ENCODE measurements at regions of chr1 and their contacts with region 1.

Region 1: GRCh38 chr1:204072931-204073836 is at the start of gene SOX13:
- DNase-seq: peak; percentile 86
- H3K4me3 ChIP-seq: peak within 1 kb of the TSS; percentile 42 to 73 (median 66)
- H3K27ac ChIP-seq: peak within 1 kb of the TSS; percentile 27
- H3K4me1 ChIP-seq: peaks cover 14% of the 10 kb centered on the region
- H3K27me3 ChIP-seq: no peaks in the 10 kb centered on the region
- CTCF ChIP-seq: peak in 1 of 2 donors; percentile 10
- POLR2A ChIP-seq: peak; percentile 94
- total RNA-seq, gene SOX13: 38.0 and 40.8 TPM in 2 replicates

Region 2: DNA sequence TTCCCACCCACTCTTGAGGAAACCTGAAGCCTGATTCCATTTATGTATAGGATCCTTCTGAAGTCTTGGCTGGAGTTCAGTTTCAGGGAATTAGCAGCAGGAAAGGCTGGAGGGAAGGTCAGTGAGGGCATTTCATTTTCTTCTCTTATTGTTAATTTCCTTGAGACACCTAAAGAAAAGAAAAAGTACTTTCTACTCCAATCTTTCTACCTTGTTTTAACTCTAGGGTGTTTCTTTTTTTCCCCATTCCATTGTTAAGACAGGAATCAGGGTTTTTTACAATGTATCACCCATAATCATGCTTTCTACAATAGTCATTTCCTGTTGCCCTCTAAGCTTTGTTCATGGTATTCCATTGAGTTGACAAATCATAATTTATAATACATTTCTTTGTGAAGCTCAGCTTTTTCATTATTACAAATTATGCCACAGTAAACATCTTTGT is 184.4 kb before region 1 on chr1:
- CTCF ChIA-PET with region 1: no interaction called
- POLR2A ChIA-PET with region 1: no interaction called
- dilution Hi-C with region 1: no loop called
- intact Hi-C with region 1: loop called (anchors 2 kb)
- DNase-seq: peak; percentile 92
- H3K4me3 ChIP-seq: no peak overlapping the region
- H3K27ac ChIP-seq: peak overlapping the region; percentile 92
- H3K4me1 ChIP-seq: peaks cover 18% of the 10 kb centered on the region
- H3K27me3 ChIP-seq: no peaks in the 10 kb centered on the region
- CTCF ChIP-seq: no peak
- POLR2A ChIP-seq: no peak

Region 3: GRCh38 chr1:203996126-203996525 is 77.1 kb before region 1 on chr1:
- CTCF ChIA-PET with region 1: no interaction called
- POLR2A ChIA-PET with region 1: no interaction called
- dilution Hi-C with region 1: no loop called
- intact Hi-C with region 1: loop called (anchors 2 kb)
- DNase-seq: no peak
- H3K4me3 ChIP-seq: no peak overlapping the region
- H3K27ac ChIP-seq: no peak overlapping the region
- H3K4me1 ChIP-seq: no peaks in the 10 kb centered on the region
- H3K27me3 ChIP-seq: peaks cover 1 to 6% of the 10 kb centered on the region in 2 experiments
- CTCF ChIP-seq: no peak
- POLR2A ChIP-seq: no peak

Region 4: DNA sequence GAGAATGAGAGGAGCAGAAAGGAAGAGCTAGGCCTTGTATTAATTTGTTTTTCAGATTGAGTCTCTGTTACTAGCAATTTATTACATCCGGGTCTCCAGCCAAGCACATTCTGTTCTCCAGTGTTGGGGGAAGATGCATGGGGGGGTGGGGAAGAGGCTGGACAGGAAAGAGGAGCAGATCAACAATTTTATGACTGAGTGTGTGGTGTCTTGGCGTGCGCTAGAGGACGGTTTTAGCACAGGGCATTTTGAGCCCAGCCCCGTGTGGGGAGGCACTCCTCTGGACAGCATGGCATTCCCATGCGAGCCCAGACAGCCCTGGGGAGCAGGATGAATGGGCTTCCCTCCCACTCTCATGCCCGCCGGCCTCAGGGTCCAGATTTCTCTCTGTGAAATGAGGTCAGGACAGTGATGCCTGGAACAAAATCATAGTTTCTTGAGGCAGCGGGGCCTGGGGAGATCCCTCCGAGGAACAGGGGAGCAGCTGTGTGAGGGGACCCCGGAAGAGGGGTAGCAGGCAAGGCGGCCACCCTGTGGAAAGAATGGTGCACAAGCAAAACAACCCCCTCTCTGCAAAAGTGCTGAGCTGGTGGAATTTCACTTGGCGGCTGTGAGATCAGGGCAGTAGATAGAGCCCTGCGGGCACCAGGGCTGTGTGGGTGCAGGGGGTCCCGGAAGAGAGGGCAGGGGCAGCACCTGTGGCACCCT is 16.0 kb after region 1 on chr1:
- CTCF ChIA-PET with region 1: interaction called, 24 read pairs
- POLR2A ChIA-PET with region 1: no interaction called
- dilution Hi-C with region 1: no loop called
- intact Hi-C with region 1: loop called (anchors 1 kb)
- DNase-seq: peak; percentile 50
- H3K4me3 ChIP-seq: no peak overlapping the region
- H3K27ac ChIP-seq: peak overlapping the region; percentile 6
- H3K4me1 ChIP-seq: peaks cover 25% of the 10 kb centered on the region
- H3K27me3 ChIP-seq: no peaks in the 10 kb centered on the region
- CTCF ChIP-seq: no peak
- POLR2A ChIP-seq: no peak

Region 5: GRCh38 chr1:204104133-204104871 is 31.1 kb after region 1 on chr1:
- CTCF ChIA-PET with region 1: interaction called, 4 read pairs
- POLR2A ChIA-PET with region 1: interaction called, 3 read pairs
- dilution Hi-C with region 1: no loop called
- intact Hi-C with region 1: loop called (anchors 1 kb)
- DNase-seq: peak; percentile 53
- H3K4me3 ChIP-seq: no peak overlapping the region
- H3K27ac ChIP-seq: peak overlapping the region; percentile 73
- H3K4me1 ChIP-seq: peaks cover 55% of the 10 kb centered on the region
- H3K27me3 ChIP-seq: no peaks in the 10 kb centered on the region
- CTCF ChIP-seq: no peak
- POLR2A ChIP-seq: peak; percentile 20

Measured in endothelial cell of umbilical vein (primary cell).